Testis (tissue), 5 donors: ENCODE measurements at regions of chr18 and their contacts with region 1.

Region 1: DNA sequence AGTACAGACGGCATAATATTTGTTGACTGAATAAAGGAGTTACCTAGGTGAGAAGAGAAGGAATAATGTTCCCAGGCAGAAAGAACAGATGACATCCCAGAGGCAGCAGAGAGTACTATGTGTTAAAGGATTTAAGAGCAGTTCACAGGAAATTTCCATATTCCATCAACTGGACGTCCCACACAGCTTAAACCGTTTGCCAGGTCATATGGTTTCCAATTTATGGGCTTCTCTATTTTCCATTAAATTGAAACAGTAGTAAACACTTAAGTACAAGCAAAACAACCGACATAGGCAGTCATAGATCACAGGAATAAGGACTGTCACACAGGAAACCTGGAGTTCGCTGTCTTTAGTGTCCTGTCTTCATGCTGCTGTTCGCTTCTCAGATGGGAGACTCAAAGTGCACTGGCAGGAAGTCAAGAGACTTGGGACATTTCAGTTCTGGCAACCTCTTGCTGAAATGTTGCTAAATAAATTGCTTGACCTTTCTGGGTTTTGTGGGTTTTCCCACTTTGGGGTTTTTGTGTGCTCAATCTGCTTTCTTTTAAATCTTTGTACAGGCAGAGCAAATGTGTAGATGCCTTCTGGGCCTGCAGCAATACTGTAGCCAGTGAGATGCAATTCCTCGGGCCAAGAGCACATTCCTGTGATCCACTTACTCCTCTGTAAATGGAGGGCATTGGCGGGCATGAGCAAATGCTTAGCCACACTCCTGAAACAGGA is 5.8 kb upstream of the PIEZO2 start:
- DNase-seq: no peak
- H3K4me3 ChIP-seq: no peak overlapping the region
- H3K27ac ChIP-seq: no peak overlapping the region
- H3K4me1 ChIP-seq: no peaks in the 10 kb centered on the region
- H3K27me3 ChIP-seq: no peaks in the 10 kb centered on the region
- CTCF ChIP-seq: no peak
- POLR2A ChIP-seq: no peak

Region 2: GRCh38 chr18:10838553-10838952 is 316.6 kb before region 1 on chr18:
- intact Hi-C with region 1: loop called (anchors 5 kb)
- DNase-seq: no peak
- H3K4me3 ChIP-seq: no peak overlapping the region
- H3K27ac ChIP-seq: no peak overlapping the region
- H3K4me1 ChIP-seq: no peaks in the 10 kb centered on the region
- H3K27me3 ChIP-seq: no peaks in the 10 kb centered on the region
- CTCF ChIP-seq: no peak
- POLR2A ChIP-seq: no peak